Heart right ventricle (tissue), 16 donors: ENCODE measurements at regions of chr18 and their contacts with region 1.

Region 1: DNA sequence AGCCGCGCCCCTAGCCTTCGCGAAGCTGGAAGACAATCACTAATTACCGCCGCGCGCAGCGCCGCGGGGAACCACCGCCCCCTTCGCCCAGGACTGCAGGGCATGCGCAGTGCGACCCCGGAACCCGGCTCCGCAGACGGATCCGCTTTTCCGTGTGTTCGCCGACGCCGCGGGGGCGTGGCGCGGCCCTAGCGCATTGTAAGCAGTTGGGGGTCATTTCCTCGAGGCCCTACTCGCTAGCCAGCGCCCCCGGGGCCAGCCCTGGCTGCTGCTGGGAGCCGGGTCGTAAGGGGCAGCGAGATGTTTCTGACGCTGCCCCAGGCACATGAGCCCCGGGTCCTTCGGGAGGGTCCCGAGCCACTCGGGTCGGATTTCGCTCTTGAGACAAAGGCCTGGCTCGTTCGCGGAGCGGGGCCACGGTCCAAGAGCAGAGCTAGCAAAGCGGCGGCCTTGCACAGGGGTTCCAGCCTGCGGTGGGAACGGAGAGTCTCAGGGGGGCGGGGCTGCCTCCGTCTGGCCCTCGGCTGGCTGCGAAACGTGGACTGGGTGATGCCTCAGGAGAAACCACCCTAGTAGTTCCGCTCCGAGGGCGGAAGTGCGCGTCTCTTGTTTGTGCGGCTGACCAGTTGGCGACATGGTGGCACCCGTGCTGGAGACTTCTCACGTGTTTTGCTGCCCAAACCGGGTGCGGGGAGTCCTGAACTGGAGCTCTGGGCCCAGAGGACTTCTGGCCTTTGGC is at the starts of genes ELP2 and SLC39A6:
- DNase-seq: peak; percentile 95 to 96
- ATAC-seq: peak; percentile 96 to 99 (median 98)
- H3K4me3 ChIP-seq: peak within 1 kb of the TSS; percentile 89 to 98 (median 96)
- H3K27ac ChIP-seq: peak within 1 kb of the TSS; percentile 91 to 100 (median 99)
- H3K4me1 ChIP-seq: peaks cover 0 to 43% (median 32%) of the 10 kb centered on the region in 9 donors
- H3K27me3 ChIP-seq: no peaks in the 10 kb centered on the region
- CTCF ChIP-seq: peak in 1 of 9 donors; percentile 23
- total RNA-seq, gene ELP2: 41.9 to 64.2 (median 57.9) TPM
- total RNA-seq, gene SLC39A6: 10.8 to 18.4 (median 13.3) TPM

Region 2: DNA sequence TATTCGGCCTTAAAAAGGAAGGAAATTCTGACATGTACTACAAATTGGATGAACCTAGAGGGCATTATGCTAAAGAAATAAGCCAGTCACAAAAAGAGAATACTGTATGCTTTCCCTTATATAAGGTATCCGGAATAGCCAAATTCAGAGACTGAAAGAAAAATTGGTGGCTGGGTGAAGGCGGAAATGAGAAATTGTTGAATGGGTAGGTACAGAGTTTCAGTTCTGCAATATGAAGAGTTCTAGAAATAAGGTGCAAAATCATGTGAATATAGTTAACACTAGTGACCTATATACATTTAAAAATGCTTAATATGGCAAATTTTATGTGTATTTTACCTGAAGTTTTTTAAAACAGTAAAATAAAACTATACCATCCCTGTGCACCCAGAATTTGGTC is 113.8 kb before region 1 on chr18:
- intact Hi-C with region 1: loop called in 1 of 10 experiments (anchors 10 kb)
- DNase-seq: no peak
- ATAC-seq: no peak
- H3K4me3 ChIP-seq: no peak overlapping the region
- H3K27ac ChIP-seq: no peak overlapping the region
- H3K4me1 ChIP-seq: peaks cover 0 to 7% (median 0%) of the 10 kb centered on the region in 9 donors
- H3K27me3 ChIP-seq: no peaks in the 10 kb centered on the region
- CTCF ChIP-seq: no peak

Region 3: GRCh38 chr18:36067055-36067957 is 62.2 kb before region 1 on chr18 and contains the start of gene RPRD1A:
- intact Hi-C with region 1: loop called in 4 of 10 experiments (anchors 2 to 5 kb)
- DNase-seq: peak; percentile 98
- ATAC-seq: peak; percentile 97 to 100 (median 98)
- H3K4me3 ChIP-seq: peak within 1 kb of the TSS; percentile 80 to 98 (median 87)
- H3K27ac ChIP-seq: peak within 1 kb of the TSS; percentile 16 to 94 (median 90)
- H3K4me1 ChIP-seq: peaks cover 0 to 32% (median 16%) of the 10 kb centered on the region in 9 donors
- H3K27me3 ChIP-seq: peaks cover 0 to 14% (median 0%) of the 10 kb centered on the region in 7 donors
- CTCF ChIP-seq: peak in 2 of 9 donors; percentile 9 to 11
- total RNA-seq, gene RPRD1A: 39.0 to 51.3 (median 49.7) TPM

Region 4: DNA sequence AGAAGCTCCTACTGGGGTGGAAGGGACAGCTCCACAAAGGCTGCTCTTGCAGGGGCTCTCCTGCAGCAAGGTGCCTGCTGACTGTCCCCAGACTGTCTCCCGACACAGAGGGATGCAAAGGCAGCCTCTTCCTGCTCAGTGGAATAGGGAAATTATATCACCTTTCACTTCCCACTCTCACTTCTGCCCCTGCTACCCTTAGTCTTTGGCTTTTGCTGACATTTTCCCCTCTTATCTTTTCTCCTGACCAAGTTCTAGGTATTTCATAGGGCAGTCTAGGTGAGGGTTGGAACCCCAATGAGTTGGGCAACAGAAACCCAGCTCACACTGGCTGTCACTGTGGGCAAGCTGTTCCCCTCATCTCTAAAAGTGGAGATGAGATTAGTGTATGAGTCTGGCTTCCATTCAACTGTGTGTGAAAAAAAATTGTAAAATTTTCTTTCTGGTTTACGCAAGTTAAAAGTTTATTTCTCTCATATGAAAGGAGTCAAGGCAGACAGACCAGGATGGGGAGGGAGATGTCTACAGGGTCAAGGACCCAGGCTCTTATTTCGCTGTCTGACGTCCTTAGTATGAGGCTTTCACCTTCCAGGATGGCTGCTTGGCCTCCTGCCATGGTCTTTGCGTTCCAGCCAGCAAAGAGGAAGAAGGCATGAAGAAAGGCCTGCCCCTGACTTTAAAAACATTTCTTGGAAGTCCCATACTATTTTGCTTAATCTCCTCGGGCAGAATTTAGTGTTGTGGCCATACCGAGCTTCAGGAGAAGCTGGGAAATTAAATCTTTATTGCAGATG is 50.3 kb after region 1 on chr18:
- intact Hi-C with region 1: loop called in 1 of 10 experiments (anchors 5 kb)
- DNase-seq: peak; percentile 66 to 71
- ATAC-seq: peak in 7 of 8 donors; percentile 49 to 73 (median 61)
- H3K4me3 ChIP-seq: no peak overlapping the region
- H3K27ac ChIP-seq: peak overlapping the region in 2 of 10 donors; percentile 24 to 51
- H3K4me1 ChIP-seq: peaks cover 4 to 26% (median 15%) of the 10 kb centered on the region in 9 donors
- H3K27me3 ChIP-seq: no peaks in the 10 kb centered on the region
- CTCF ChIP-seq: no peak